Mammary epithelial cell (primary cell): ENCODE measurements at regions of chr19 and their contacts with region 1.

Region 1: GRCh38 chr19:46717034-46717723 is at the start of gene PRKD2:
- DNase-seq: peak; percentile 72
- H3K4me3 ChIP-seq: peak within 1 kb of the TSS; percentile 59 to 91 (median 63)
- H3K27ac ChIP-seq: peak within 1 kb of the TSS; percentile 82
- H3K4me1 ChIP-seq: peaks cover 32% of the 10 kb centered on the region
- H3K27me3 ChIP-seq: no peaks in the 10 kb centered on the region
- CTCF ChIP-seq: no peak
- total RNA-seq, gene PRKD2: 20.2 to 55.5 TPM

Region 2: DNA sequence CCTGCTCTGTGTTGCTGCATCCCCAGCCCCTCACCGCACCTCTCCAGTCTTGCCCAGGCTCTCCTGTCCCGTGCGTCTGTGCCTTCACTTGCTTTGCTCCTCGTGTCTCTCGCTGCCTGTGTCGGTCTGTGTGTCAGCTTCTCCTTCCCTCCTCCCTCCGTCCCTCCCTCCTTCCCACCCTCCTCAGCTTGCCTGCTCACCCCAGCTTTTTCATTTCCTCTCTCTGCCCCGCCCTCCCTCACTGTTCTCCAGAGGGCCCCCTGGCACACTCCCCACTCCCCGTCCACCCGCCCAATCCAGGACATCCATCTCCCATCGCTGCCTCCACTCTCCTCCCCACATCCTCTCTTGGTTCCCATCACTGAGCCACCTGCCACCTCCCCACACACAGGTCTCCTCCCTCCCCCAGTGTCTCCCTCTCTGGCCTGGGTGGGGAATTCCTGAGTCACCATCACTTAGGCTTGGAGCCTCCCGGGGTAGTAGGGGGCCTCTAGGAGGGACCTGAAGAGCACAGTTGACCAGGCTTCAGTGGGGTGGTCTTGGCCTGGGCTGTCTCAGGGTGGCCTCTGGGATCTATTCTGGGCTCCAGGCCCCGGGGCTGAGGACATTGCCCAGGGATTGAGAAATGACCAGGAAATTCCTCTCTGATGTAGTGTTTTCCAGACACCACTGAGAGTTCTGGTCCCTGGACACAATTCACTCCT is 92.1 kb before region 1 on chr19 and contains the start of gene PTGIR:
- CTCF ChIA-PET with region 1: no interaction called
- dilution Hi-C with region 1: loop called (anchors 5 kb)
- in situ Hi-C with region 1: no loop called
- intact Hi-C with region 1: loop called (anchors 5 kb)
- DNase-seq: no peak
- H3K4me3 ChIP-seq: no peak within 1 kb of the TSS
- H3K27ac ChIP-seq: no peak within 1 kb of the TSS
- H3K4me1 ChIP-seq: no peaks in the 10 kb centered on the region
- H3K27me3 ChIP-seq: no peaks in the 10 kb centered on the region
- CTCF ChIP-seq: no peak
- total RNA-seq, gene PTGIR: under 0.01 TPM in 1 of 2 donors, not detected in the other

Region 3: DNA sequence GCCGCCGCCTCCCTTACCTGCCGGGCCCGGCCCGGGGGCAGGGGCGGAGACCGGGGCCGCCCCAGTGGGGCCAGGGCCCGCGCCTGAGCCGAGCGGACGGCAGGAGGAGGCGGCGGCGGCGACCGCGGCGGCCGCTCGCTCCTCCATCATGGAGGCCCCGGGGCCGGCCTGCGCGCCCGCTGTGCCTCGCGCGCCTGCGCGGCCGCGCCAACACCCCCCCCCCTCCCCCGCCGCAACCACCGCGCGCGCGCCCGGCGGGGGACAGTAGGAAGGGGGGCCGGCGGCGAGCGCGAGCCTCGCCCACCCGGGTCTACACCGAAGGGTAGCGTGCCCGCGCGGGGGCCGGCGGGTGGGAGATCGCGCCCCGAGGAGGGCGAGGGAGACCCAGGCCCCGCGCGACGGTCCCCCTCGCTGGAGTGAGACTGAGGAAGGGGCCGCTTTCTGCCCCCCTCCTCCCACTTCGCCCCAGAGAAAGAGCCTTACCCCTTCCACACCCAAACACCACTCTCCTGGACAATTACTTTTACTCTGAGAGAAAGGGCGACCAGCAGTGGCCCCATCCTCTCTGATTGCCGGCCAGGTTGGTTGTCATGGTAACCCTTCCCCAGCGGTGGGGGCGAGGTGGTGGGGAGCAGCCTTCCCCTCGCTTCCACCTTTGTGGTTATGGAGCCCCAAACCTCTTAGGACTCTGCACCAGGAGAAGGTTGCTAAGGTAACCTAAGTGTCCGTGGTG is 29.3 kb after region 1 on chr19 and contains the start of gene STRN4:
- CTCF ChIA-PET with region 1: no interaction called
- dilution Hi-C with region 1: no loop called
- in situ Hi-C with region 1: no loop called
- intact Hi-C with region 1: no loop called
- DNase-seq: peak; percentile 29
- H3K4me3 ChIP-seq: peak within 1 kb of the TSS; percentile 72 to 85 (median 77)
- H3K27ac ChIP-seq: peak within 1 kb of the TSS; percentile 64
- H3K4me1 ChIP-seq: peaks cover 5% of the 10 kb centered on the region
- H3K27me3 ChIP-seq: no peaks in the 10 kb centered on the region
- CTCF ChIP-seq: no peak
- total RNA-seq, gene STRN4: 59.2 to 92.4 TPM